Left ventricle myocardium superior (tissue), 1 donor: ENCODE measurements at regions of chr20 and their contacts with region 1.

Region 1: DNA sequence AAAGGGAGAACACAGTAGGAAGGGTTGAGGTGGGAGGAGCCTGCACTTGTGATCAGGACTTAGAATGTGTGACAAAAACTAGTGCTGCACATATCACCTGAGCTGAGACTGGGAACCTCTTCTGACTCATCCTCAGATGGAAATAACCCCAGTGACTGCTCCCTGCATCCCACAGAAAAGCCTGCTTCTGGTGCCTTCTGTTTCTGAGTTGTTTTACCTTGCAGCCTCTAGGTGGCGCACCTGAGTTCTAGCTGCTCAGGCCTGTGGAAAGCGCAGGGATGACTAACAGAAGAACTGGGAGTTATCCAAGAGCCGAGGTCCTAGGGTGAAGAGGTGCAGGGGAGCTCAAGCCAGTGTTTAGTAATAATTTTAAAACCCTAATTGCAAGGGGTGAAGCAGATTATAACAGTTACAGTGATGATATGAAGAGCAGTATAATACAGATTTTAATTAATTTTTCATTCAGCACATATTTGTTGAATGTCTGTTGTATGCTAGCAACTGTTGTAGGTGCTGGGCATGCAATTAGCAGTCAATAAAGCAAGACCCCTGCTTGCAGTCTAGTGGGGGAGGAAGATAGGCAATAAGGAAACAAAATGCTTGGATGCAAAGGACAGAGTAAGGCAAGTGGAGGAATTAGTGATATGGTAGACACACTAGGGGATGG is 302.5 kb downstream of the DHX35 start:
- DNase-seq: peak; percentile 60
- ATAC-seq: peak; percentile 71

Region 2: GRCh38 chr20:39108746-39109145 is 155.9 kb before region 1 on chr20:
- intact Hi-C with region 1: no loop called
- DNase-seq: no peak
- ATAC-seq: no peak

Region 3: GRCh38 chr20:39874049-39874888 is 609.6 kb after region 1 on chr20:
- intact Hi-C with region 1: loop called (anchors 5 kb)
- DNase-seq: peak; percentile 72
- ATAC-seq: peak; percentile 92

Region 4: DNA sequence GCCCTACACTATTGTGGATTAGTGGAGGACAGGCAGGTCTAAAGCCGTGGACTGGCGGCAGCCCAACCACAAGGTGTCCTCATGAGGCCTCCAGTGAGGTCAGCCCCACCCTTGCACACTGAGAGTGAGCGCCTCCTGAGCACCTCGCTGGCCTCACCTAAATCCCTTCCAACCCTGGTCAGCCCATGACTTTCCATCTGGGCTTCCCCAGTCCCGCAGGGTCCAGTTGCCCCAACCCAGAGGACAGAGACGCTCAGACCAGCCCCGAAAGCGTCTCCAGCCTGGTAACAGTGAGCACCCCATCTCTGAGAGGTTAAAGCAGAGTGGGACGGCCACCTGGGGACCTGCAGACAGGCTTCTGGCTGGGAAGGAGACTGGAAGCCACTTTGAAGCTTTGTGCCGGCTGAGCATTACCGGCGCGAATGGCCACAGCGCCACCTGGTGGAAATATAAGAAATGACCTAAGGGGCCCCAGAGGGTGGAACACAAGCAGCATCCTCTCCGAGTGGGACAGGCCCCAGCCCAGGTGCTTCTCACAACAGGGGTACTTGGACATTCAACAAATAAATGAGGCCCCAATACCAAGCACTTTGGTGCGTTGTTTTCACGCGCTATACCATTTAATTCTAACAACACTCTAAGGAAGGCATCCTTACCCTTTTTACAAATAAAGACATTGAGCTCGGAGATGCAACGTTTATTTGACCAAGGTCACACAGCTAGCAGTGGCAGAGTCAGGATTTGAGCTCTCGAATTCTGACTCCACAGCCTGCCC is 1698.3 kb after region 1 on chr20:
- intact Hi-C with region 1: loop called (anchors 10 kb)
- DNase-seq: peak; percentile 67
- ATAC-seq: peak; percentile 92